Dorsolateral prefrontal cortex (tissue), 120 donors: ENCODE measurements at regions of chrX and their contacts with region 1.

Region 1: GRCh38 chrX:135973548-135974278 is at the start of gene MMGT1:
- DNase-seq: peak; percentile 67 to 84 (median 80)
- H3K4me3 ChIP-seq: peak within 1 kb of the TSS; percentile 42 to 85 (median 71)
- H3K27ac ChIP-seq: peak within 1 kb of the TSS in 58 of 59 donors; percentile 41 to 94 (median 88)
- H3K27me3 ChIP-seq: peaks cover 0 to 17% (median 0%) of the 10 kb centered on the region in 45 donors
- CTCF ChIP-seq: peak in 9 of 56 donors; percentile 6 to 37 (median 11)
- total RNA-seq, gene MMGT1: 16.6 to 29.1 (median 22.9) TPM

Region 2: DNA sequence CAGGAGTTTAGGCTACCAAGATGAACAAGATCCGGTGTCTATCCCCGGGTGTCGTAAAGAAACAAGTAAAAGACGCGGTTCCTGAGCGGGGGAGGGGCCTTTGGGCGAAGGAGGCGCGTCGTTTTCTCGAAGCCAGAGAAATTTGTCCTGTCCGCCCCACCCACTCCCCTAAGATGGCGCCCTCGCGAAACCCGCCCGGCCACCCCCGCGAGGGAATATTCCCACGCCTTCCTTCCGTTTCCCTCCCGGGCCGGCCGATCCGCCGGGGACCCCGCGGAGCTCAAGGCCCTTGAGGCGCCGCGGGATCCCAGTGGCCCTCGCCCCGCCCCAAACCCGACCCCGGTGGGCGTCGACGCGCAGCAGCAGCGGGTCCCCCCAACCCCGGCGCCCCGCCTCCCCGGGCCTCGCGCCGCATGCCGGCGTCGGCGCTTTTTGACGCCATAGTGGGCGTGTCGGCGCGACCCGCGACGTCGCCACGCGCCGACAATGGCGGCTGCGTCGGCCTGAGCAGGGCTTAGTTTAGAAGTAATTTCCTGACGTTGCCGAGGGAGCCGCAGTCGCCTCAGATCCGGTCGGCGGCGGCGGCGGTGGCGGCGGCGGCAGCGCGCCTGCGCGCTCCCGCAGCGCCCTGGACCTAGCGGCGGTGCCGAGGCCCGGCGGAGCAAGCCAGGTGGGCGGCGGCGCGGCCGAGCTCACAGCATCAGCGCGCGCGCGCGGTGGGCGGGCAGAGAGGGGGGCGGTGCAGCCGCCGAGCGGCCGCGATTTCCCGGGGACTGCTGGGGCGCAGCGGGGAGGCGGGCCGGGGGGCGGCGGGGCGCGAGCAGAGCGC is 523.3 kb after region 1 on chrX and contains the start of gene HTATSF1:
- intact Hi-C with region 1: loop called in 1 of 2 experiments (anchors 5 kb)
- DNase-seq: peak; percentile 52 to 84 (median 67)
- H3K4me3 ChIP-seq: peak within 1 kb of the TSS; percentile 50 to 84 (median 71)
- H3K27ac ChIP-seq: peak within 1 kb of the TSS; percentile 65 to 97 (median 93)
- H3K27me3 ChIP-seq: peaks cover 0 to 47% (median 9%) of the 10 kb centered on the region in 45 donors
- CTCF ChIP-seq: peak in 4 of 56 donors; percentile 8 to 27 (median 16)
- total RNA-seq, gene HTATSF1: 34.5 to 63.0 (median 48.9) TPM